GM23248 (cell line): ENCODE measurements at regions of chr18 and their contacts with region 1.

Region 1: DNA sequence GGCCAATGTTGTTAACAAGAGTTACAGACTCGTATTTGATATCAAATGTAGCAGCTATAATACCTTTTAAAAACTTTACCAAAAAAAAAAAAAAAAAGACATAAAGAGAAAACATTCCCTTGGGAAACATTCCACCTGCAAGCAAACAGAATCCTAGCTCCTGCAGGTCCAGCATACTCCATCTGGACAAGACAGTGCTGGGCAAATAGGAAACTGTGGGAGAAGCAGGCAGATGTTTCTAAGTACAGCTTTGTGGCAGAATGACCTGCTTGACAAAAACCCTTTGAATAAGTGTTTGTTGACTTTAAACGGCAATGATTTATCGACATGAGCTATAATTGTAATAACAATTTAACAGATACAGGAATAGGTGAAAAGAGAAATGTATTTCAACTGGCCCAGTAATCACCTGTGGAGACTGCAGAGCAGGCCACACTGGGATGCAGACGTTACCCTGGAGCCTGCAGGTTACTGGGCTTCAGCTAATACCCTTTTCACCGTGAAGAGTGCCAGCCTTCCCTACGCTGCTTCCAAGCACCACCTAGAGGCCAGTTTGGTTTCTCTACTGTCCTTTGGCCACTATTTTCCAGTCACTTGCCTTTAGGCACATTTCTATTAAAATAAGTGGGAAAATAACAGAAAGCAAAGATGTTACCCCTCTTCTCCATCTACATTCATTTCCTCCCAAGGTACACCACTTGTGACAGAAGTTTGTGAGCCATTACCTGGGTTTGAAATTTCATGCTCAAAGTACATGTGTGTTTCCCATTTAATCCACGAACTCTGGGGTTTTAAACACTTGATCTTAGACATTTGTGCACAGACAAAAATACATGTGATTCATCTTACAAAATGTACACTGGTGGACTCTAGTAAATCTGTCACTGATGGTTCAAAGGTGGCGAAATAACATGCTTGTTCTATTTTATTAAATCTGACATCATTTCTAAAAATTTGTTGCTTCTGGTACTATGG is 96.9 kb upstream of the ZNF397 start:
- DNase-seq: peak; percentile 77
- H3K4me3 ChIP-seq: no peak overlapping the region
- H3K27ac ChIP-seq: no peak overlapping the region
- H3K4me1 ChIP-seq: no peaks in the 10 kb centered on the region
- H3K27me3 ChIP-seq: no peaks in the 10 kb centered on the region

Region 2: GRCh38 chr18:34767601-34768027 is 376.3 kb before region 1 on chr18:
- in situ Hi-C with region 1: no loop called
- DNase-seq: peak; percentile 94
- H3K4me3 ChIP-seq: no peak overlapping the region
- H3K27ac ChIP-seq: peak overlapping the region; percentile 95
- H3K4me1 ChIP-seq: peaks cover 40% of the 10 kb centered on the region
- H3K27me3 ChIP-seq: no peaks in the 10 kb centered on the region

Region 3: GRCh38 chr18:35010993-35011392 is 132.9 kb before region 1 on chr18:
- in situ Hi-C with region 1: loop called (anchors 10 kb)
- DNase-seq: no peak
- H3K4me3 ChIP-seq: no peak overlapping the region
- H3K27ac ChIP-seq: no peak overlapping the region
- H3K4me1 ChIP-seq: no peaks in the 10 kb centered on the region
- H3K27me3 ChIP-seq: no peaks in the 10 kb centered on the region

Region 4: DNA sequence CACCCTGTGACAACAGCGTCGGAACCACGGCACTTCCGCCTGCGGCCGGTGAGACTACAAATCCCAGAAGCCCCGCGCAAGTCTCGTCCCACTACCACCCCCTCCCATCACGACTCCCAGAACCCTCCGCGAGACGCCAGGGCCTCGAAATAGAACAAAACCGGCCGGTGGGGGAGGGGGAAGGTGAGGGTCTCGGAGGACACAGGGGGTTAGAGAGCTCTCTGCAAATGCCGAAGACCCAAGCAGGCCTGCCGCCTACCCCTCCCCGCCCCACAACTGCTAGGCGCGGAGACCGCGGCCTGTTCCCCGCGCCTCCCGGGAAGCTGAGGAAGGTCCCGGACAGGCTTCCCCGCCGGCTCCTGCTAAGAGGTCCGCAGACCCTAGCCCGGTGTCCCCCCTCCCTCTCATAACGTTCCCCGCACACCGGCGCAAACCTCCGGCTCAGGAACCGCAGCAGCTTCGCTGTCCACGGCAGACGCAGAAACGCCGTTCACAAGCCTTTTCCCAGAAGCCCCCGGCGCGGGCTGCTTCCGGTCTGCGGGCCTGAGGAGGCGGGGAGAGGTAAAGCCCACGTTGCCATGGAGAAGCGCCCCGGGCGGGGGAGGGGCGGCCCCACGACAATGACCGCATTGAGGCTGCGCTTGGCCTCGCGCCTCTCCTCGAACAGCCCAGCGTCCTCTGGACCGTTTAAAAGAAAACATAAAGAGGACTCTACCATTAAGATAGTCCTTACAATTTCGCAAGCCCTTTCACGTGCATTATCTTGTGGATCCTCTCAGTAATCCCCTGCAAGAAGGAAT is 200.2 kb after region 1 on chr18 and contains the start of gene ZNF24:
- in situ Hi-C with region 1: no loop called
- DNase-seq: peak; percentile 98
- H3K4me3 ChIP-seq: peak within 1 kb of the TSS; percentile 98
- H3K27ac ChIP-seq: peak within 1 kb of the TSS; percentile 91
- H3K4me1 ChIP-seq: peaks cover 20% of the 10 kb centered on the region
- H3K27me3 ChIP-seq: no peaks in the 10 kb centered on the region
- total RNA-seq, gene ZNF24: 23.1 and 23.6 TPM in 2 replicates